RWPE1 (cell line): ENCODE measurements at regions of chr1 and their contacts with region 1.

Region 1: DNA sequence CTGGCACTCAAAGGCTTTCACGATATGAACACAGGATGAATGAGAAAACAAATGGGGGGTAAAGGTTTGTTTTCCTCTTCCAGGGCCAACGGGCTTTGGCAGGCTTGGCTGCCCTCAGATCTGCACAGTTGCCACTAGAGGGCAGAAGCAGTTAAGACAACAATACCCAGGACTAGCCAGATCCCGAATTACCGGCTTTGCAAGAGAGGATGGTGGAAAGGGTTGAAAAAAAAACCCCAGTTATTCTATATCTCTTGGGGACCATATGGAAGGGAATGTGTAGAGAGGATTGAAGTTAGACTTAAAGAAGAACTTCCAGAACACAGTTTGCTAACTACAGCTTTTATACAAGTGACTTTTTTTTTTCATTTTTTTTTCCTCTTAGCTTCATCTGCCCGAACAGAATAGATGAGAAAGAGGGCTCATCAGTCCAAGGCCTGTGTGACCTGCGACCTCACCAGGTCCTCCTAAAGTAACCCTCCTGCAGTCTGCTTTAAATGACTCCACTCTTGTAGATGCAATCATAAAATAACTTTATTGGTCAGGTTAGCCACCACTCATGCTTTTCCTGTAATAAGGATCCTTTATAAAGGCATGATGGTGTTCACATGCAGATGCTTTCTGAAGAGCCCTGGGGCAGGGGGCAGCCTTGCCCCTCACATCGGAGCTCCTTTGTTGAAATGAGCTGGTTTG is 10.7 kb downstream of the FMOD start:
- DNase-seq: peak; percentile 97
- H3K27ac ChIP-seq: no peak overlapping the region
- CTCF ChIP-seq: peak; percentile 92

Region 2: DNA sequence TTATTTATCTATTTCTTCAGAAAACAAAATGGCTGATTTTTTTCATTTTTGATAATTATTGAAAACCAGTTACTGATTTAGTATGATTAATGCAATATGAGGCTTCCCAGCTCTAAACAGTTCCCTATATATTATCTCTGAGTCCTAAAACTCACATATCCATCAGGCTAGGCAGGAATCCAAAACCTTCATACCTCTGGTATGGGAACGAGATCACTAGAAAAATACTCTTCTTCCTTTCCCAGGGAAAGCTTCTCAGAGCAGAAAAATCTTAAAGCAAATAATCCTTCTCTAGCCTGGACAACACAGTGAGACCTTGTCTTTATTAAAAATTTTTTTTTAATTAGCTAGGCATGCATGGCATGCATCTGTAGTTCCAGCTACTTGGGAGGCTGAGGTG is 574.5 kb before region 1 on chr1:
- CTCF ChIA-PET with region 1: no interaction called
- POLR2A ChIA-PET with region 1: no interaction called
- DNase-seq: no peak
- H3K27ac ChIP-seq: no peak overlapping the region
- CTCF ChIP-seq: no peak

Region 3: GRCh38 chr1:203326830-203327683 is 13.2 kb before region 1 on chr1:
- CTCF ChIA-PET with region 1: interaction called, 14 read pairs
- POLR2A ChIA-PET with region 1: no interaction called
- DNase-seq: peak; percentile 99
- H3K27ac ChIP-seq: peak overlapping the region; percentile 90
- CTCF ChIP-seq: no peak

Region 4: GRCh38 chr1:203368624-203369451 is 28.6 kb after region 1 on chr1:
- CTCF ChIA-PET with region 1: interaction called, 15 read pairs
- POLR2A ChIA-PET with region 1: no interaction called
- DNase-seq: peak; percentile 81
- H3K27ac ChIP-seq: peak overlapping the region; percentile 58
- CTCF ChIP-seq: peak; percentile 62

Region 5: GRCh38 chr1:203463469-203464062 is 123.3 kb after region 1 on chr1:
- CTCF ChIA-PET with region 1: no interaction called
- POLR2A ChIA-PET with region 1: no interaction called
- DNase-seq: no peak
- H3K27ac ChIP-seq: no peak overlapping the region
- CTCF ChIP-seq: no peak

Region 6: DNA sequence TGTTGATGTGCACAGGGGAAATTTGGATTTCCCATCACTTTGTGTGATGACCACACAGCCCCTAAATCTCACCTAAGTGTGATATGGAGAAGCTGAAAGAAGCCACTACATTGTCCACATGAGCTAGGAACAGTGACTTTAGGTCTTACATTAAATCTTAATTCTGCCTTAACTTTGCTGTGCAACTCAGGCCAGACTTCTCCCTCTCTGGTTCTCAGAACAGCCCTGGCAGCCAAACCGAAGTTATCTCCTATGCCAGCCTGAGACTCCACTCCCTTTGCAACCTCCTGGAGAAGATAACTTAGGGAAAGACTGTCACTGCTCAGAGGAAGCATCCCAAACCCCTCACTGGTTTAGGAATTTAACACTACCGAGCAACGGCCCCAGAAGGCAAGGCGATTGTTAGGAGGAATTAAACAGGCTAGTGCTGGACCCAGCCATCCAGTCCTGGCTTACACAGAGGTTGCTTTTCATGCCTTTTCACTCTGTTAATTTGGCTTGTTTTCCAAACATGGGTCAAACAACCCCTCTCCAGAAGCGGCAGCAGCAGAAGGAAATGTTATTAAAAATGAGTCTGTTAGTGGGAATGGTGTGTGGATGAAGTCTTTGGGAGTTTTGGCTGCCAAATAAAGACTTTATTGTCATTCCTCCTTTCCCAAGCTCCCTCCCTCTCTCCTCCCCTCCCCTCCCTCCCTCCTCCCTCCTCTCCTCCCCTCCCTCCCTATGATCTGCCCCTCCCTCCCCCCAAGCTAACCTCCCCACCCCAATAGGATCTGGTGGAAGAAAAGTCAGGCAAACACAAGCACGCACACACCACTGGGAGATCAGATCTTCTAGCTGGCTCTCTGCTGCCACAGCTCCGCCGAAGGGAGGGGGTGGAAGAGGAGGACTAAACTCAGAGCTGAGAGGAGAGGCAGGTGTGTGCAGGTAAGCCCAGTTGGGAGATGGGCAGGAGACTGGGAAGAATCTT is 135.0 kb after region 1 on chr1 and contains the start of gene PRELP:
- CTCF ChIA-PET with region 1: interaction called, 17 read pairs
- POLR2A ChIA-PET with region 1: no interaction called
- DNase-seq: peak; percentile 64
- H3K27ac ChIP-seq: no peak within 1 kb of the TSS
- CTCF ChIP-seq: no peak

Region 7: DNA sequence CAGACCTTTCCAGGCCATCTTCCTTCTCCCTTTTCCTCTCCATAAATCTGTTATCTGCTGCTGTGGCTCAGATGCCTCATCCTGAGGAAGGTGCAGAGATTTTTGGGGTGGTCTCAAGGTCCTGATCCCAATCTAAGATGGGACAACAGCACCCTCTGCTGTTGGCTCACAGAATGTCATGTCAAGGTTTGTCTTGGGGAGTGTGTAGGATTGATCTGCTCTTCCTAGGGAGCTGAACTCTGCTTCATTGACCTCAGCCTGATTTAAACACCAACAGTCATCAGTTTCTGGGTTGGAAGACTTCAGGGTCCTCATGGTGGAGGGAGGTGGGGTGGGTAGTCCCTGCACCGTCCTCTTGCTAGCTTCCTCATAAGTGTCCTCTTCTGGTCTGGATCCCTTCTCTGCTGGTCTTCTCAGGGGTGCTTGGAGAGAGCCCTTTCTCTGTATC is 361.9 kb after region 1 on chr1:
- CTCF ChIA-PET with region 1: interaction called, 48 read pairs
- POLR2A ChIA-PET with region 1: no interaction called
- DNase-seq: peak; percentile 81
- H3K27ac ChIP-seq: no peak overlapping the region
- CTCF ChIP-seq: peak; percentile 77